Activated naive CD4-positive, alpha-beta T cell treated with anti-CD3 and anti-CD28 coated beads for 36 hours (primary cell): ENCODE measurements at regions of chr3 and their contacts with region 1.

Region 1: GRCh38 chr3:20054549-20054987 is 14.3 kb downstream of the KAT2B start:
- DNase-seq: peak; percentile 84
- H3K4me3 Mint-ChIP-seq: no peak overlapping the region
- H3K27ac Mint-ChIP-seq: no peak overlapping the region
- H3K4me1 Mint-ChIP-seq: peaks cover 23% of the 10 kb centered on the region
- H3K27me3 Mint-ChIP-seq: no peaks in the 10 kb centered on the region

Region 2: GRCh38 chr3:18098960-18099587 is 1955.5 kb before region 1 on chr3:
- CTCF ChIA-PET with region 1: no interaction called
- intact Hi-C with region 1: loop called (anchors 10 kb)
- DNase-seq: peak; percentile 70
- H3K4me3 Mint-ChIP-seq: no peak overlapping the region
- H3K27ac Mint-ChIP-seq: peak overlapping the region; percentile 59
- H3K4me1 Mint-ChIP-seq: peaks cover 19% of the 10 kb centered on the region
- H3K27me3 Mint-ChIP-seq: no peaks in the 10 kb centered on the region

Region 3: GRCh38 chr3:19937459-19938294 is 116.9 kb before region 1 on chr3:
- CTCF ChIA-PET with region 1: no interaction called
- intact Hi-C with region 1: loop called (anchors 1 kb)
- DNase-seq: peak; percentile 31
- H3K4me3 Mint-ChIP-seq: no peak overlapping the region
- H3K27ac Mint-ChIP-seq: peak overlapping the region; percentile 63
- H3K4me1 Mint-ChIP-seq: peaks cover 13% of the 10 kb centered on the region
- H3K27me3 Mint-ChIP-seq: peaks cover 6% of the 10 kb centered on the region

Region 4: GRCh38 chr3:20104167-20104661 is 49.6 kb after region 1 on chr3:
- CTCF ChIA-PET with region 1: no interaction called
- intact Hi-C with region 1: loop called (anchors 5 kb)
- DNase-seq: peak; percentile 29
- H3K4me3 Mint-ChIP-seq: no peak overlapping the region
- H3K27ac Mint-ChIP-seq: no peak overlapping the region
- H3K4me1 Mint-ChIP-seq: peaks cover 22% of the 10 kb centered on the region
- H3K27me3 Mint-ChIP-seq: no peaks in the 10 kb centered on the region

Region 5: DNA sequence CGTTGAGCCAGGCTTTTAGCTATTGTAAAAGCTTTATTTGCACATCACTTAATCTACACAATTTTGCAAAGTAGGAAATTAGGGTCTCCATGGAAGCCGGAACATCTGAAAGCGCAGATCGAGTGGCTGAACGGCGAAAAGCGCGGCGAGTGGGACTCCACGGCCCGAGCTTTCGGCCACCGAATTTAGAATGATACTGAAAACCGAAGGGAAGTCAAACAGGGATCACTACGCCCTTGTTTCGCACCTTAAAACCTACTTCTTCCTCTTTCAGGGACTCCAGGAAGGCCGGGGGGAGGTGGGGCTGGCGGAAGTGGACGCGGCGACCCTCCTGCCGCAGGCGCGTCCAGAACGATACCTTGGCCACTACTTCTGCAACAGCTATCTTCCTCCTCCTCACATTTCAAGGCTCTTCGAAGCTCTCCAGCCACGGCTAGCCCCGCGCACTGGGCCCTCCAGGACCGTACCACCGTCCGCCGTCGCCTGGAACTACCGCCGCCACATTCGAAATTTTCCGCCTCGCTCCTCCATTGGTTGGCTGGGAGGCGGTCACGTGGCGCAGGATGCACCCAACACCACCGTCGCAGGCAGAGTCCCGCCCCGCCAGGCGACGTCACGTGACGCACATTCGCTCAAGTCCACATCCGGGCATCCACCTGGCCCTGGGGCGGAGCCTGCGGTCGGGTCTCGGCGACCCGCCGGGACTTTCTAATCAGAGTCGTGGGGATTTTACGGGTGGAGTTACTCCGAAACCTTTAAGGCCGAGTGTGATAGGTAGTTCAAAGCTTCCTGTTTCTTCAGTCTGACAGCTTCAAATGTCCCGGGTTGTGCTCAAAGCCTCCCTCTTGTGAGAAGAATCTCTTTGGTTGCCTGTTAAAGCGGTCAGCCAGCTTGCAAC is 131.4 kb after region 1 on chr3 and contains the start of gene SGO1:
- CTCF ChIA-PET with region 1: interaction called, 3 read pairs
- intact Hi-C with region 1: loop called (anchors 1 kb)
- DNase-seq: peak; percentile 99
- H3K4me3 Mint-ChIP-seq: no peak within 1 kb of the TSS
- H3K27ac Mint-ChIP-seq: no peak within 1 kb of the TSS
- H3K4me1 Mint-ChIP-seq: peaks cover 2% of the 10 kb centered on the region
- H3K27me3 Mint-ChIP-seq: no peaks in the 10 kb centered on the region
- total RNA-seq, gene SGO1: 36.2 to 37.5 TPM

Region 6: DNA sequence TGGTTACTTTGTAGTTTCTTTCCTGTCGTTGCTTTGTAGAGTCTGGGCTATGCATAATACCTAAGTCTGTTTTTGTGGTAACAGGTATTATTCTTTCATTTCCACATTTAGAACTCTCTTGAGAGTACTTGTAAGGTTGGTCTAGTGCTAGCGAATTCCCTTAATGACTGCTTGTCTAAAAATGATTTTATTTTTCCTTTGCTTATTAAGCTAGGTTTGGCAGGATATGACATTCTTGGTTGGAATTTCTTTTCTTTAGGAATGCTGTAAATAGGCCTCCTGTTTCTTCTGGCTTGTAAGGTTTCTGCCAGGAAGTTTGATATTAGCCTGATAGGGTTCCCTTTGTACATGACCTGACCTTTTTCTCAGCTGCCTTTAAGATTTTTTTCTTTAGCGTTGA is 201.6 kb after region 1 on chr3:
- CTCF ChIA-PET with region 1: no interaction called
- intact Hi-C with region 1: no loop called
- DNase-seq: no peak
- H3K4me3 Mint-ChIP-seq: no peak overlapping the region
- H3K27ac Mint-ChIP-seq: no peak overlapping the region
- H3K4me1 Mint-ChIP-seq: no peaks in the 10 kb centered on the region
- H3K27me3 Mint-ChIP-seq: no peaks in the 10 kb centered on the region